Activated CD8-positive, alpha-beta T cell treated with anti-CD3 and anti-CD28 coated beads, Interleukin-2, amount 10 ng/mL, durations not matched to agents 7 days and 5 days (primary cell): ENCODE measurements at regions of chr1 and their contacts with region 1.

Region 1: GRCh38 chr1:59947047-59947938 is 20.7 kb upstream of the CYP2J2 start:
- DNase-seq: peak; percentile 71
- ATAC-seq: peak; percentile 86
- H3K4me3 Mint-ChIP-seq: no peak overlapping the region
- H3K27ac Mint-ChIP-seq: no peak overlapping the region
- H3K4me1 Mint-ChIP-seq: no peaks in the 10 kb centered on the region
- H3K27me3 Mint-ChIP-seq: peaks cover 6% of the 10 kb centered on the region

Region 2: GRCh38 chr1:59767119-59767518 is 180.2 kb before region 1 on chr1:
- CTCF ChIA-PET with region 1: interaction called, 10 read pairs
- POLR2A ChIA-PET with region 1: no interaction called
- DNase-seq: no peak
- ATAC-seq: no peak
- H3K4me3 Mint-ChIP-seq: no peak overlapping the region
- H3K27ac Mint-ChIP-seq: no peak overlapping the region
- H3K4me1 Mint-ChIP-seq: peaks cover 10% of the 10 kb centered on the region
- H3K27me3 Mint-ChIP-seq: no peaks in the 10 kb centered on the region

Region 3: DNA sequence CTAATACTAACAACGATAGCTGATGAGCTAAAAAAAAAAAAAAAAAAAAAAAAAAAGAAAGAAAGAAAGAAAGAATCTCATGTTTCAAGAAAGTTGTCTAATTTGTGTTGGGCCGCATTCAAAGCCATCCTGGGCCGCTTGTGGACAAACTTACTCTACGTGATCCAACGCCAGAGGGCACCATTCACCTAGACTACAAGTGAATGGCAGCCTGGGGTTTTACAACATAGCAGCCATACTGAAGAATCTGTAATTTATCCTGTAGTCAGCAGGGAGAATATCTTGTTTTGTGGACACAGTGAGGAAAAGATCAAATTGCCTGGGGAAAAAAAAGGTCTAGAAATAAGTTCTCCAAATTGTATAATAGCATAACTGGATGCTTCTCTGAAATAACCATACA is 67.7 kb before region 1 on chr1:
- CTCF ChIA-PET with region 1: interaction called, 108 read pairs
- POLR2A ChIA-PET with region 1: interaction called, 3 read pairs
- DNase-seq: peak; percentile 74
- ATAC-seq: peak; percentile 75
- H3K4me3 Mint-ChIP-seq: no peak overlapping the region
- H3K27ac Mint-ChIP-seq: no peak overlapping the region
- H3K4me1 Mint-ChIP-seq: no peaks in the 10 kb centered on the region
- H3K27me3 Mint-ChIP-seq: no peaks in the 10 kb centered on the region

Region 4: GRCh38 chr1:59903141-59903754 is 44.0 kb before region 1 on chr1:
- CTCF ChIA-PET with region 1: interaction called, 51 read pairs
- POLR2A ChIA-PET with region 1: no interaction called
- DNase-seq: peak; percentile 45
- ATAC-seq: peak; percentile 47
- H3K4me3 Mint-ChIP-seq: no peak overlapping the region
- H3K27ac Mint-ChIP-seq: no peak overlapping the region
- H3K4me1 Mint-ChIP-seq: no peaks in the 10 kb centered on the region
- H3K27me3 Mint-ChIP-seq: no peaks in the 10 kb centered on the region

Region 5: GRCh38 chr1:59971464-59971911 is 24.2 kb after region 1 on chr1:
- CTCF ChIA-PET with region 1: interaction called, 14 read pairs
- POLR2A ChIA-PET with region 1: no interaction called
- DNase-seq: peak; percentile 52
- ATAC-seq: no peak
- H3K4me3 Mint-ChIP-seq: no peak overlapping the region
- H3K27ac Mint-ChIP-seq: no peak overlapping the region
- H3K4me1 Mint-ChIP-seq: peaks cover 2% of the 10 kb centered on the region
- H3K27me3 Mint-ChIP-seq: peaks cover 24% of the 10 kb centered on the region